ENCODE measurements at regions of chr11 and their contacts with region 1.

Region 1: GRCh38 chr11:60887556-60887955 is 18.8 kb downstream of the PRPF19 start:
- DNase-seq: no peak
- CTCF ChIP-seq: peak; percentile 59

Region 2: DNA sequence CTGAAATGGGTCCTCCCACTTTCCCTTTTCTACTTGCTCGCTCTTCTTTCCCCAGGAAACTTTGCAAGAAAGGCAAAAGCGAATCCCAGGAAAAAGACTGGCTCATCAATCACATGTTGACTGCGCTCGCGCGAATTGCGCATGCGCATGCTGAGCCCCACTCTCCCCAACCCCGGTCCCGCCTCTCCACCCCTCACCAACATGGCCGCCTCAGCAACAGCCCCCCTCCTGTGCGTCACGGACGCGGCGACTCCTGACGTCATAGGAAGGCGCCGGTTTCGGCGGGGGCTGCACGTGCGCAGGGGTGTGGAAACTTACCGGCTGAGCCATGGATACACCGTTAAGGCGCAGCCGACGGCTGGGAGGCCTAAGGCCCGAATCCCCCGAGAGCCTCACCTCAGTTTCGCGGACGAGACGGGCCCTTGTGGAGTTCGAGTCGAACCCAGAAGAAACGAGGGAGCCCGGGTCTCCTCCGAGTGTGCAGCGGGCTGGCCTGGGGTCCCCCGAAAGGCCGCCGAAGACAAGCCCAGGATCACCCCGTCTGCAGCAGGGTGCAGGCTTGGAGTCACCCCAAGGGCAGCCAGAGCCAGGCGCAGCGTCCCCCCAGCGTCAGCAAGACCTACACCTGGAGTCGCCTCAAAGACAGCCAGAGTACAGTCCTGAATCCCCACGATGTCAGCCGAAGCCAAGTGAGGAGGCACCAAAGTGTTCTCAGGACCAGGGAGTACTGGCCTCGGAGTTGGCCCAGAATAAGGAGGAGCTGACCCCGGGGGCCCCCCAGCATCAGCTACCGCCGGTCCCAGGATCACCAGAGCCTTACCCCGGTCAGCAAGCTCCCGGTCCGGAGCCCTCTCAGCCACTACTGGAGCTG is 45.5 kb before region 1 on chr11 and contains the start of gene CCDC86:
- CTCF ChIA-PET with region 1: interaction called, 11 read pairs
- POLR2A ChIA-PET with region 1: no interaction called
- DNase-seq: peak; percentile 100
- CTCF ChIP-seq: no peak

Region 3: DNA sequence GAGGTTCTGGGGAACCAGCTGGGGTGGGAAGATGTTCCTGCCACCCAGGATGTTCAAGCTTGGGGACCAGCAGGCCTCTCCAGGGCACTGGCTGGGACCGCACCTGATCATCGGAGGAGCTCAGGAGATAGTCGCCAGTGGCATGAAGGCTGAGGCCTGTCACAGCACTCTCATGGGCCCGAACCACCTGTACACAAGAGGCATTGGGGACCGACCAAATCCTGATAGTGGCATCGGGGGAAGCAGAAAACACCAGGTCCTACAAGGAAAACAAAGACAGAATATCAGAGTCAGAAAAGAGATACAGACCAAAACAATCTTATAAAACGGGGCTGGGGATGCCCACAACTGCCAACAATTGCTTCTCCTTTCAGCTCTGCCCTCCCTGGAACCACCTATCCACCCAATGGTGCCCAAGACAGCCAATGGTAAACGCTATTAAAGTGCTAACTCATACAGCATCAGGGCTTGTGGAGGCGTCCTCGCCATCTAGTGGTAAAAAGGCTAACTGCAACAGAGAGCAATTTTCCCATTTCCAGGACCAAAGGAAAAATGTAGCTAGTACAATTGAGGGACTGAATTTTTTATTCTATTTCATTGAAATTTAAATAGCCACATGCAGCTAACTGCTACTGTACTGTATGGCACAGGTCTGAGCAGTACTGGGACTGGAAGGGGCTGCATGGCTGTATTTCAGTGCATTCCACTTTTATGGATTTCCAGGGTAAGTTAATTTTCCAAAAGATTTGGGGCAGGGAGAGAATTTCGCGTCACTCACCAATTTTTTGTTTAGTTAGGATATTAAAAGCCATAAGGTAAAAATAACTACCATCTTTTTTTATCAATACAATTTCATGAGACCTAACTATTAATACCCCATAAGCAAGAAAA is 11.7 kb after region 1 on chr11:
- CTCF ChIA-PET with region 1: interaction called, 129 read pairs
- POLR2A ChIA-PET with region 1: no interaction called
- DNase-seq: peak; percentile 58
- CTCF ChIP-seq: peak; percentile 89

Region 4: DNA sequence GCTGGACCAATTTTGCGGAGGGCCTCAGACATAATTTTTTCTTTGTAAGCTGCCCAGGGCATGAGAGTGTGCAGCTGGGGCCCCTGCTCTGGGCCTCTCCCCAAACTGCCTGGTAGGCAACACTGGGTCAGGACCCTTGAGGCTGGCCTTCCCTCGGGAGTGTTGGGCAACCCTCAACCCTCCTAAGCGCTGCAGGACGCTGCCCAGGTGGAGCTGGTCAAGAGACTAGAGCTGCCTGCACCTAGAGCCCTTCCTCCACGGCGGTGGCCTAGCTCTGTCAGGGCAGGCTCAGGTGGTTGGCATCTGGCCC is 36.2 kb after region 1 on chr11:
- CTCF ChIA-PET with region 1: no interaction called
- POLR2A ChIA-PET with region 1: no interaction called
- DNase-seq: no peak
- CTCF ChIP-seq: no peak

Measured in GM10248 (cell line).